Motor neuron (in vitro differentiated cells): ENCODE measurements at regions of chr5 and their contacts with region 1.

Region 1: GRCh38 chr5:66306105-66306843 is 162.2 kb downstream of the SREK1 start:
- ATAC-seq: peak; percentile 61 to 90 (median 82)
- H3K4me3 ChIP-seq: no peak overlapping the region
- H3K27ac ChIP-seq: no peak overlapping the region
- H3K4me1 ChIP-seq: peaks cover 2 to 7% of the 10 kb centered on the region in 2 donors

Region 2: DNA sequence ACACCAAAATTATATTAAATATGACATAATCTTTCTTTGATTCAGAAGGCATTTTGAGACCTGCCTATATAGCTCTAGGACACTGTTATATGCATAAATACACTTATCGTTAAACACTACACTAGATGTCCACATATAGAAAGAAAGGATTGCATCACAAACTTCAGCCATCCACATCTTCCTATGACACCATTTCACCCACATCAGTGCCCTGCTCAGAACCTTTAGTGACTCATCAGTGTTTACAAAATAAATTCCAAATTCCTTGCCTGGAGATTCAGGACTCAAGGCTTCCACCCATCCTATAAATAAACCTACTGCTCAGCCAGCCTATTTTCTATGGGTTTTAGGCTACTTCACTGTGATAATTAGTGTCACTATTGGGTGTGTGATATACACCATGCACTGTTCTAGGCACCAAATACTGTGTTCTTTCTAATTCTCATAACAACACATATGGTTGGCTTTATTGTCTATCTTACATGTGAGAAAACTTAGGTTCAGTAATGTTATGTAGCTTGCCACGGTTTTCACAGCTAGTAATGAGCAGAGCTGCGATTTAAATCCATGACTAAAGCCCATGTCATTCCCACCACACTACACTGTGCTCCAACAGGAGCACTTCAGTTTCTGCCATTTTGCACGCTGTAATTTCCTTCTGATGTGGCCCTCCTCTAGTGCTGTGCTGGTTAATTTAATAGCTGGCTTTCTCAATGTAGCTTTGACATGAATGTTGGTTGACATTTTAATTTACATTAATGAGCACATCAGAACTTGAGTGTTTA is 58.9 kb before region 1 on chr5:
- in situ Hi-C with region 1: no loop called
- ATAC-seq: peak in 5 of 8 experiments; percentile 56 to 97 (median 67)
- H3K4me3 ChIP-seq: no peak overlapping the region
- H3K27ac ChIP-seq: no peak overlapping the region
- H3K4me1 ChIP-seq: no peaks in the 10 kb centered on the region

Region 3: GRCh38 chr5:66440202-66440680 is 134.0 kb after region 1 on chr5:
- in situ Hi-C with region 1: loop called in 1 of 9 experiments (anchors 25 kb)
- ATAC-seq: peak; percentile 89 to 97 (median 94)
- H3K4me3 ChIP-seq: no peak overlapping the region
- H3K27ac ChIP-seq: no peak overlapping the region
- H3K4me1 ChIP-seq: peaks cover 0 to 7% of the 10 kb centered on the region in 2 donors

Region 4: DNA sequence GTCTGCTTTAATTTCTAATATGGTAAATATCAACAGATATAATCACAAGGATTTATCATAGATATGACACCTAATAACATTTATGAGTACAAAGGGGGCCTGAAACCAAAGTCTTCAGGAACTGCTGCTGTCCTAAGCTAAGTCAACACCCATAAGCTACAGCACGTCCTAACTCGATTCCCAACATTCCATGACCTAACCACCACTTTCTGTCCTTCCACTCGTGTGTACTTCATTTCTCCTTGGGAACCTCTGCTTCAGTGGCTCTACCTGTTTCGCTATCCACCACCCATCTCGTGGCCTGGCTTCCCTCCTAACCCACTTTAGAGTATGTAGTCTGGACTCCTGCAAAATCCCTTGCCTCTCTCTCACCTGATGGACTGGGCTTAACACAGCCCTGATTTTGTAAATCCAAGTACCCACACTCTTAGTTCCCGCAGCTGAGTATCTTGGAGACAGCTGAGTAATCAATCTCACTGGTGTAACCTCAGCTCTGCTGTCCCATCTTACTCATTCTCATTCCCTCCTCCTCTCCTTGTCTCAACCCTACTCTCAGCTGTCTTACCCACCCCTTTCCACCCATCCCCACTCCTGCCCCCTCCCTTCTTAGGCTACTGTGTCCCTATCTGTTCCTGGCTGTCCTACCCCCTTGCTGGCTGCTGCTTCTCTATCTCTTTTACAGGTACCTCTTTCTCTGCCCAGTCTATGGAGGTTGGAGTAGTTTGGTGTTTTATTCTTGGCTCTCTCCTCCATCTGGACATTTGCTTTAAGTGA is 391.7 kb after region 1 on chr5:
- in situ Hi-C with region 1: no loop called
- ATAC-seq: no peak
- H3K4me3 ChIP-seq: no peak overlapping the region
- H3K27ac ChIP-seq: no peak overlapping the region
- H3K4me1 ChIP-seq: no peaks in the 10 kb centered on the region

Region 5: DNA sequence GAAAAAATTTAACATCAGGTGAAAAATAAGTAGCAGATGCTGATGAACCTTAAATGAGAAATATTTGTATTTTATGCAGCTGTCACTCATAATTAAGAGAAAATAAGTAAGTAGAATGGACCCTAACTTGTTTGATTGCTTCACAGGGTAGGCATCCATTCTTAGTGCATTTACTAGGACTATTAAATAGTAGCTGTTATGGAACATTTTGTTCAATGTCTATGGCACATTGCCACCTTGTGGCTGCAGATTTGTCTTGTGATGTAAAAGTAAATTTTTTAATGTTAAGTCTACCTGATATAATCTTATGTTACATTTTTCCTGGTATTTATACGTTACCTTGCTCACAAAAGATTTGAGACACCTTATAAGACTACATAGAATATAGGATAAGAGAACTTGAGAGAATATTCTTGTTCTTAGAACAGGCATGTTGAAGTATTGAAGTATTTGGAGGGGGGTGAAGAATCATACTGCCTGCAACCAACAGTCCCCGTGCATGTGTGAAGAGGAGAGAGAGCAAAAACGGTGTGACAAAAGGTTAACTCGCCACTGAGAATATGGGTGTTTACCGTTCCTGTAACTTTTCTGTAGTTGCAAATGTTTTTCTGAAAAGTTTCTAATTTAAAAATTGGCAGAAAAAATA is 451.0 kb after region 1 on chr5:
- in situ Hi-C with region 1: loop called in 8 of 9 experiments (anchors 10 to 25 kb)
- ATAC-seq: peak in 5 of 8 experiments; percentile 36 to 73 (median 59)
- H3K4me3 ChIP-seq: no peak overlapping the region
- H3K27ac ChIP-seq: no peak overlapping the region
- H3K4me1 ChIP-seq: peaks cover 0 to 4% of the 10 kb centered on the region in 2 donors

Region 6: DNA sequence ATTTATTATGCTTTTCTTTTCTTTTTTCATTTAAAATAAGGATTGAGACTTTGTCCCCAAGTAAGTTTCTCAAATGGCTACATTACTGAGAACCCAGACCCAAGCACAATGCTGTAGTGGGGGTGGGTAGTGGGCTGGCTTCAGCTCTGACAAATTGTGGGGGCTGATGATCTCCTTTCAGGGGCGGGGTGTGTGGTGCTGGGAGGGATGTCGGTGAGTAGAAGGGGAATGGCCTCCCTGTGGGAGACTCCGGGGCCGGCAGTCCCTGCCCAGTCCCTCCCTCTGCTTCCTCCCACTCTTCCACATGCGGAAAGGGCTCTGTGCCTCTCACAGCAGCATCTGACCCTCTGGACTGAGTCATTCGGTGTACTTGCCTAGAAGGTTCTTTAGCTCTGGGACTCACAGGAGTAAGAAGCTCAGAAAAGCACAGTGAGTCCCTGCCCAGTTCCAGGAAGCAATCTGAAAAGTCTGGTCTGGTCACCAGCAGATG is 876.1 kb after region 1 on chr5:
- in situ Hi-C with region 1: loop called in 1 of 9 experiments (anchors 25 kb)
- ATAC-seq: peak; percentile 67 to 99 (median 94)
- H3K4me3 ChIP-seq: no peak overlapping the region
- H3K27ac ChIP-seq: no peak overlapping the region
- H3K4me1 ChIP-seq: peaks cover 20 to 32% of the 10 kb centered on the region in 2 donors

Region 7: DNA sequence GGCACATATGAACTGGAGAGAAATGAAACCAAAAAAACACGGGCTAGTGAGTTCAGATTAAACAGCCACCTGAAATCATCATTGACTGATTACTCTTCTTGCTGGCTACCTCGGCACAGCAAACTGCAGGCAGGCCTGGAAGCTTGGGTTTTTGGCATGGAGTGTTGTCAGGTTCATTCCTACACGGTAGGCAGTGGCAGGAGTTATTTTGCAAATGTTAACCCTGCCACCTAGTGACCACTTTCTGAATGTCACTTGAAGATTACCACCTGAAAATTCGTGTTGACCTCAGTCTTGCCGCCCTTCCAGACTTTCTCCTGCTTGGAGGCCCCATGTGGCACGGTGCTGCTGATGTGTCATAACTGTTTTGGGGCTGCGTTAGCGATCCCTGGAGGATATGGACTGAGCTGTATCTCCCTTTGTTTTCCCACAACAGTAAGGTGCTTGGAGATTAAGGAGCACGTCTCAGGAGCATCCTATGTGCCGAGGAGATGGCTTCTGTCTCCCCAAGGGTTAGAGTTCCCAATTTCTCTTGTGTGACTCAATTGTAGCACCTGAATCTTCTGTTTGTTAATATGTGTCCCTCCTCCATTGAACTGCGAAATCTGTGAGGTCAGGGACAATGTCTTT is 903.0 kb after region 1 on chr5:
- in situ Hi-C with region 1: loop called in 2 of 9 experiments (anchors 25 kb)
- ATAC-seq: peak; percentile 61 to 96 (median 85)
- H3K4me3 ChIP-seq: no peak overlapping the region
- H3K27ac ChIP-seq: no peak overlapping the region
- H3K4me1 ChIP-seq: no peaks in the 10 kb centered on the region